ENCODE measurements at regions of chr18 and their contacts with region 1.

Region 1: GRCh38 chr18:32092422-32093101 is 888 bp downstream of the RNF138 start:
- DNase-seq: peak; percentile 100
- ATAC-seq: peak; percentile 89
- H3K4me3 Mint-ChIP-seq: peak overlapping the region; percentile 93
- H3K27ac Mint-ChIP-seq: peak overlapping the region; percentile 97
- H3K4me1 Mint-ChIP-seq: peaks cover 41% of the 10 kb centered on the region
- H3K27me3 Mint-ChIP-seq: no peaks in the 10 kb centered on the region

Region 2: GRCh38 chr18:31596081-31596872 is 496.3 kb before region 1 on chr18:
- CTCF ChIA-PET with region 1: no interaction called
- POLR2A ChIA-PET with region 1: no interaction called
- intact Hi-C with region 1: no loop called
- DNase-seq: no peak
- ATAC-seq: no peak
- H3K4me3 Mint-ChIP-seq: no peak overlapping the region
- H3K27ac Mint-ChIP-seq: no peak overlapping the region
- H3K4me1 Mint-ChIP-seq: no peaks in the 10 kb centered on the region
- H3K27me3 Mint-ChIP-seq: no peaks in the 10 kb centered on the region

Region 3: DNA sequence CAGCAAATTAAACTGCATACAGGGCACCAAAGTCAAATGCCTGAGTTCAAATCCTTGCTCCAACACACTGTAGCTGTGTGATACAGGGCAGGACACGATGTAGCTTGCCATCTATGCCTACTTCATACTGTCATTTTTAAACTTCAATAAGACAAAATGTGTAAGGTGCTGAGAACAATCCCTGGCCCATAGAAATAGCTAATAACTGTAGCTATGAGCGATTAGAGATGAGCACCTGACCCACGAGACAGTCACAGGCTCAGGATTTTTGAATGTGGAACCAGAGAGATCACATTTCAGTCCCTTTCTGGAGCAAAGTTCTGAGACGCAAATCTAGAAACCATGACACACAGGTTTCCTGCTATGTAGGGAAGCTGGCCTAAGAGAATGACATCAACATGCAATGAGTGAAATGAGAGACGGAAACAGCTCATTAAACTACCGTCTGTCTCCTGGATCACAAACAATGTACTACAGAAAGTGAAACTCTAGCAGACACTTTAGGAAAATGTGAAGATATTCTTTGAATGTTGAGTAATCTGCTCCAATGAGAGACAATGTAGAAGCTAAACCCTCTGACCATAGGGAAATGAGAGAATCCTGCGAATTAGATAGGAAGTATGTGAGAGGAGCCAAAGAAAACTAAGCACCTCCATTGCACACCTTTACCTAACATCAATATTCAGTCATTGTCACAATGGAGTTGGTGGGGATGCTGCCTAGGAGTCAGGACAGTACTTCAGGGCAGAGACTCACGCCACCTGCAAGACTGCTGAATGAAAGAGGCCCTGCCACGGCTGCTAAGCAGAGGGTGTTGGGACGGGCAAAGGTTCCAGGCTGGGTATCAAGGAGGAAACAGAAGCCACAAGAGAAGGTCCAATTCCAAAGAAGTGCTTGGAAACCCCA is 433.6 kb before region 1 on chr18:
- CTCF ChIA-PET with region 1: no interaction called
- POLR2A ChIA-PET with region 1: no interaction called
- intact Hi-C with region 1: loop called in 1 of 2 experiments (anchors 10 kb)
- DNase-seq: peak; percentile 34
- ATAC-seq: peak; percentile 90
- H3K4me3 Mint-ChIP-seq: no peak overlapping the region
- H3K27ac Mint-ChIP-seq: peak overlapping the region; percentile 73
- H3K4me1 Mint-ChIP-seq: peaks cover 22% of the 10 kb centered on the region
- H3K27me3 Mint-ChIP-seq: peaks cover 2% of the 10 kb centered on the region

Region 4: GRCh38 chr18:32048507-32049091 is 44.0 kb before region 1 on chr18:
- CTCF ChIA-PET with region 1: interaction called, 3 read pairs
- POLR2A ChIA-PET with region 1: interaction called, 10 read pairs
- intact Hi-C with region 1: loop called (anchors 1 to 5 kb)
- DNase-seq: peak; percentile 52
- ATAC-seq: peak; percentile 62
- H3K4me3 Mint-ChIP-seq: no peak overlapping the region
- H3K27ac Mint-ChIP-seq: peak overlapping the region; percentile 84
- H3K4me1 Mint-ChIP-seq: peaks cover 42% of the 10 kb centered on the region
- H3K27me3 Mint-ChIP-seq: no peaks in the 10 kb centered on the region

Region 5: GRCh38 chr18:32530947-32531651 is 438.5 kb after region 1 on chr18:
- CTCF ChIA-PET with region 1: no interaction called
- POLR2A ChIA-PET with region 1: no interaction called
- intact Hi-C with region 1: loop called in 1 of 2 experiments (anchors 5 kb)
- DNase-seq: peak; percentile 43
- ATAC-seq: peak; percentile 96
- H3K4me3 Mint-ChIP-seq: no peak overlapping the region
- H3K27ac Mint-ChIP-seq: peak overlapping the region; percentile 14
- H3K4me1 Mint-ChIP-seq: peaks cover 17% of the 10 kb centered on the region
- H3K27me3 Mint-ChIP-seq: peaks cover 15% of the 10 kb centered on the region